RWPE1 (cell line): ENCODE measurements at regions of chr4 and their contacts with region 1.

Region 1: GRCh38 chr4:83043801-83044407 is 8.9 kb downstream of the COPS4 start:
- DNase-seq: peak; percentile 37
- H3K27ac ChIP-seq: peak overlapping the region; percentile 78
- CTCF ChIP-seq: no peak

Region 2: GRCh38 chr4:83054928-83055327 is 11.0 kb after region 1 on chr4:
- CTCF ChIA-PET with region 1: interaction called, 10 read pairs
- POLR2A ChIA-PET with region 1: no interaction called
- DNase-seq: peak; percentile 26
- H3K27ac ChIP-seq: no peak overlapping the region
- CTCF ChIP-seq: peak; percentile 58

Region 3: DNA sequence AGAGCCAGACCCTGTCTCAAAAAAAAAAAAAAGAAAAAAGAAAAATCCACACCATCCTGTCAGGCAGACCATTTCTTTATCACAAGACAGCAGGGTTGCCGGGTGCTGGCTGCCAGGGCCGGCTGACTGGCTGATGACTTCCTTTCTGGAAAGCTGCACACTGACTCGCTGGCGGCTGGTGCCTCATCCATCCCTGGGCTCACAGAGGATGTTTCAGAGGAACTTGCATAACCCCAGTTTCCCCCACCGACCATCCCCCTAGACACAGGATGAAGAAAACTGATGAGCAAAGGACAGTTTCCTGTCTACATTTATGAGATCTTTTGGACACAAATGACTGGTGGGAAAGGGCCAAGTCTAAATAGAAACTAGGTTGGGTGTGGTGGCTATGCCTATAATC is 276.6 kb after region 1 on chr4:
- CTCF ChIA-PET with region 1: interaction called, 4 read pairs
- POLR2A ChIA-PET with region 1: interaction called, 11 read pairs
- DNase-seq: peak; percentile 14
- H3K27ac ChIP-seq: peak overlapping the region; percentile 18; the same call in 1 of the 2 replicates
- CTCF ChIP-seq: no peak